Natural killer cell (primary cell): ENCODE measurements at regions of chr11 and their contacts with region 1.

Region 1: GRCh38 chr11:72814286-72815109 is at the start of gene ATG16L2:
- DNase-seq: peak; percentile 93 to 97
- ATAC-seq: peak; percentile 66 to 88 (median 78)
- H3K4me3 ChIP-seq: peak within 1 kb of the TSS; percentile 66
- H3K4me3 Mint-ChIP-seq: peak within 1 kb of the TSS; percentile 99
- H3K27ac ChIP-seq: peak within 1 kb of the TSS; percentile 100
- H3K27ac Mint-ChIP-seq: peak within 1 kb of the TSS; percentile 98 to 100
- H3K4me1 ChIP-seq: peaks cover 51% of the 10 kb centered on the region
- H3K4me1 Mint-ChIP-seq: peaks cover 50 to 63% of the 10 kb centered on the region in 2 donors
- H3K27me3 ChIP-seq: no peaks in the 10 kb centered on the region
- H3K27me3 Mint-ChIP-seq: no peaks in the 10 kb centered on the region
- CTCF ChIP-seq: no peak
- total RNA-seq, gene ATG16L2: 172 to 190 (median 179) TPM

Region 2: GRCh38 chr11:72222907-72223614 is 591.4 kb before region 1 on chr11:
- intact Hi-C with region 1: loop called (anchors 5 kb)
- DNase-seq: peak; percentile 84 to 95
- ATAC-seq: peak; percentile 68 to 87 (median 76)
- H3K4me3 ChIP-seq: peak overlapping the region; percentile 92
- H3K4me3 Mint-ChIP-seq: peak overlapping the region; percentile 88
- H3K27ac ChIP-seq: peak overlapping the region; percentile 76
- H3K27ac Mint-ChIP-seq: peak overlapping the region; percentile 85 to 95
- H3K4me1 ChIP-seq: peaks cover 54% of the 10 kb centered on the region
- H3K4me1 Mint-ChIP-seq: peaks cover 20 to 54% of the 10 kb centered on the region in 2 donors
- H3K27me3 ChIP-seq: no peaks in the 10 kb centered on the region
- H3K27me3 Mint-ChIP-seq: no peaks in the 10 kb centered on the region
- CTCF ChIP-seq: no peak

Region 3: DNA sequence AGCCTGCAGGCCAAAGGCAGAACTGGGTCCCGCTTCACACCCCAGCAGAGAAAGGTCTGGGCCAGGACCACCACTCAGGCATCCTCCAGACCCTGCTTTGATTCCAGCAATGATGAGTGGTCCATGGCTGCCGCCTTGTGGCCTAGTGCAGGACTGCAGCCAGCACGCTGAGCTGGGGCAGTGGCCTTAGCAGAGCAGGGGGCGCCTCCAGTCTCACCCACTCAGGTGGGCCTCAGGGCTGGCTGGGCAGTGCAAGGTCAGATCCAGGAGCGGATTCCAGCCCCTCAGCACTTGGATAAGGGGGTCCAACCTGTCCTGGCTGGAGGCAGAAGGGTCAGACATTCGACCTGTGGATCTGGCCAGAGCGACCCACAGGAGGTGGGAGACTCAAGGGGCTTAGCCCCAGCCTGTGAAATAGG is 130.7 kb before region 1 on chr11:
- intact Hi-C with region 1: no loop called
- DNase-seq: peak; percentile 70 to 78
- ATAC-seq: peak; percentile 74 to 78 (median 76)
- H3K4me3 ChIP-seq: no peak overlapping the region
- H3K4me3 Mint-ChIP-seq: no peak overlapping the region
- H3K27ac ChIP-seq: no peak overlapping the region
- H3K27ac Mint-ChIP-seq: peak overlapping the region in 1 of 2 donors; percentile 61
- H3K4me1 ChIP-seq: peaks cover 5% of the 10 kb centered on the region
- H3K4me1 Mint-ChIP-seq: peaks cover 24 to 44% of the 10 kb centered on the region in 2 donors
- H3K27me3 ChIP-seq: no peaks in the 10 kb centered on the region
- H3K27me3 Mint-ChIP-seq: no peaks in the 10 kb centered on the region
- CTCF ChIP-seq: peak; percentile 91

Region 4: DNA sequence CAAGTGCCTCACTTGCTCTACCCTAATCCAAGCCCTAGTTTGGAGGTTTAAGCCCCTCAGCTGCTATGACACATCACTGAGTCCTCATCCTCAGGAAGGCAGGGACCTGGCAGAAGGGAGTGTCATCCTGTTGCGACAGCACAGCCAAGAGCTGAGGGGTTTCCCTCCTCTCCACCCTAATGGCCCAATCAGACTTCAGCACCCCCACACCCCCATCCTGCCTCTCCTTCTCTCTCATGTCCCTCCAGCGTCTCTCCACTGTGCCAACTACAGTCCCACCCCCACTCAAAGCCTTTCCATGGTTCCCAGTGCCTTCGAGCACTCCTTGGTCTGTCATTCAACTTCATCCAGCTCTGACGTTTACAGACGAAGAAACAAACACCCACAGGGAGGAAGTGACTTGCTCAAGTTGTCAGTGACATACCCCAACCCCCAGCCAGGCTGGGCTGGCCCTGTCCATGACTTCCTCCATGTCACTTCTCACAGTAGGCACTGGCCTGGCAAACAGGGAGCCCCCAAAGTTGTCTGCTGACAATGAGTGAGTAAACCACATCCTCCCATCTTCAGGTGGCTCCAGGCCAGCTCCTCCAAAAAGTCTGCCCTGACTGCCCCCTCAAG is 77.9 kb before region 1 on chr11:
- intact Hi-C with region 1: loop called (anchors 1 kb)
- DNase-seq: peak; percentile 78 to 88
- ATAC-seq: peak; percentile 66 to 91 (median 82)
- H3K4me3 ChIP-seq: no peak overlapping the region
- H3K4me3 Mint-ChIP-seq: peak overlapping the region; percentile 87
- H3K27ac ChIP-seq: peak overlapping the region; percentile 97
- H3K27ac Mint-ChIP-seq: peak overlapping the region; percentile 97 to 100
- H3K4me1 ChIP-seq: peaks cover 91% of the 10 kb centered on the region
- H3K4me1 Mint-ChIP-seq: peaks cover 75 to 80% of the 10 kb centered on the region in 2 donors
- H3K27me3 ChIP-seq: no peaks in the 10 kb centered on the region
- H3K27me3 Mint-ChIP-seq: no peaks in the 10 kb centered on the region
- CTCF ChIP-seq: no peak

Region 5: GRCh38 chr11:72793425-72794367 is 20.8 kb before region 1 on chr11 and contains the start of gene STARD10:
- intact Hi-C with region 1: loop called (anchors 1 kb)
- DNase-seq: peak; percentile 97 to 98
- ATAC-seq: peak; percentile 93 to 99 (median 94)
- H3K4me3 ChIP-seq: peak within 1 kb of the TSS; percentile 80
- H3K4me3 Mint-ChIP-seq: peak within 1 kb of the TSS; percentile 96
- H3K27ac ChIP-seq: peak within 1 kb of the TSS; percentile 97
- H3K27ac Mint-ChIP-seq: peak within 1 kb of the TSS; percentile 99
- H3K4me1 ChIP-seq: peaks cover 22% of the 10 kb centered on the region
- H3K4me1 Mint-ChIP-seq: peaks cover 23 to 24% of the 10 kb centered on the region in 2 donors
- H3K27me3 ChIP-seq: no peaks in the 10 kb centered on the region
- H3K27me3 Mint-ChIP-seq: no peaks in the 10 kb centered on the region
- CTCF ChIP-seq: peak; percentile 94
- total RNA-seq, gene STARD10: 10.9 to 17.3 (median 11.7) TPM

Region 6: DNA sequence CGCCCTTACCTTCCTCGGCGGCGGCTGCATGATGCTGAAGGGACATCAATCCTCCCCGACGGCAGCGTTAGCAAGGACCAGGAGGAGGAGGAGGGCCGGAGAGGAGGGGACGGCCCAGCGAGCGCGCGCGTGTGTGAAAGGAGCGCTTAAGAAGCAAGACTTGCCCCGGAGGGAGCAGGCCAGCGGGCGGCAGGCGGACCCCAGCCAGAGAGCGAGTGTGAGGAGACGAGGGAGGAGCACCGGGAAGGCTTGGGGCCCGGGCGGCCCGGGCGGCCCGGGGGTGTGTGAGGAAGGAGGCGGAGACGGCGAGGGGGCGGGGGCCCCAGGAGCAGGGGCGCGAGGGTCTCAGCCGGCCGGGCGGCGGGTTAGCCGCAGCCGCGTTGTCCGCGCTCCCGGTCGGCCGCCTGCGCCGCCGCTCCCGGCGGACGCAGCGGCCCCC is 327.4 kb after region 1 on chr11:
- intact Hi-C with region 1: loop called (anchors 2 kb)
- DNase-seq: peak in 1 of 2 donors; percentile 56
- ATAC-seq: peak; percentile 24 to 39 (median 36)
- H3K4me3 ChIP-seq: peak overlapping the region; percentile 89
- H3K4me3 Mint-ChIP-seq: peak overlapping the region; percentile 96
- H3K27ac ChIP-seq: peak overlapping the region; percentile 88
- H3K27ac Mint-ChIP-seq: peak overlapping the region; percentile 98
- H3K4me1 ChIP-seq: peaks cover 45% of the 10 kb centered on the region
- H3K4me1 Mint-ChIP-seq: peaks cover 37 to 50% of the 10 kb centered on the region in 2 donors
- H3K27me3 ChIP-seq: no peaks in the 10 kb centered on the region
- H3K27me3 Mint-ChIP-seq: no peaks in the 10 kb centered on the region
- CTCF ChIP-seq: no peak